Sigmoid colon (tissue), 7 donors: ENCODE measurements at regions of chr10 and their contacts with region 1.

Region 1: DNA sequence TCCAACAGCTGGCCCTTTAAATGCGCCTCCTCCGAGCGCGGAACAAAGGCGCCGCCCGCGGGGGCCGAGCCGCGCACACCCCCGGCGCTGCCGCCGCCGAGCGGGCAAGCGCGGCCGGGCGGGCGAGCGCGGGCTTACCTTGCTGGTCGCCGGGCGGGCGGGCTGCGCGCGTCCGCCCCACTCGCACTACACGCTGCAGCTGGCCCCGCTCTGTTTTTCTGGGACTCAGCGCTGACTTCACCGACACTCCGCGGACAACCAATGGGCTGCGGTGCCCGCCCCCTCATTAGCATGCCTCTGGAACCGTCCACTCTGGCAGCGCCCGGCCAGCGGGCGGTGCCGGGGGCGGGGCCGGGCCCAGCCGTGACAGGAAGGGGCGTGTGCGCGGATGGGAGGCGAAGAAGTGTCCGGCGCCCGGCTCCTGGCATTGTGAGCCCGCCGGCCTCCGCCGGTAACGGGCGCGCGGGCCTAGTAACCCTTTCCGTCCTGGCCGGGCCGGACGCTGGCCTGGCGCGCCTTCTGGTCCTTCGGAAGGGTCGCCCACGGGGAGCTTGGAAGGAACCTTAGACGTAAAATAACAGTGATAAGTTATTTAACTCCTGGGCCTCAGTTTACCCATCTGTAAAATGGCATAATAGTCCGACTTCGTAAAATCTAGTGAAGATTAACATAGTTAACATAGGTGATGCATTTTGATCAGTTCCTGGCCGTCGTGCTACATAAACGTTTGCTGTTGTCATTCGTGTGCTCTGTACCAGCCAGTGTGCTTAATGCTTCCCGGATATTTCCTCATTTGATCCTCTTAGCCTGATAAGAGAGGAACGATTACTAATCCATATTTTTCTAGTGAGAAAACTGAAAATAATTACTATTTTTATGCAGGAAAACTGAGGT is at the start of gene SORBS1:
- DNase-seq: peak; percentile 99
- H3K4me3 ChIP-seq: peak within 1 kb of the TSS; percentile 82 to 96 (median 90)
- H3K27ac ChIP-seq: peak within 1 kb of the TSS; percentile 93 to 98 (median 96)
- H3K4me1 ChIP-seq: peaks cover 0 to 43% (median 37%) of the 10 kb centered on the region in 4 donors
- H3K27me3 ChIP-seq: no peaks in the 10 kb centered on the region
- CTCF ChIP-seq: no peak
- EP300 ChIP-seq: peak in 1 of 4 donors; percentile 44
- POLR2A ChIP-seq: peak in 1 of 2 donors; percentile 53
- total RNA-seq, gene SORBS1: 664 to 1,403 (median 979) TPM

Region 2: GRCh38 chr10:95430231-95430951 is 131.0 kb before region 1 on chr10:
- intact Hi-C with region 1: loop called (anchors 5 kb)
- DNase-seq: peak; percentile 86
- H3K4me3 ChIP-seq: no peak overlapping the region
- H3K27ac ChIP-seq: peak overlapping the region; percentile 84 to 98 (median 90)
- H3K4me1 ChIP-seq: peaks cover 0 to 97% (median 93%) of the 10 kb centered on the region in 4 donors
- H3K27me3 ChIP-seq: no peaks in the 10 kb centered on the region
- CTCF ChIP-seq: peak; percentile 90 to 93 (median 92)
- EP300 ChIP-seq: no peak
- POLR2A ChIP-seq: no peak

Region 3: GRCh38 chr10:95459446-95460045 is 101.9 kb before region 1 on chr10:
- intact Hi-C with region 1: no loop called
- DNase-seq: no peak
- H3K4me3 ChIP-seq: peak overlapping the region in 1 of 4 donors; percentile 4
- H3K27ac ChIP-seq: peak overlapping the region; percentile 84 to 98 (median 90)
- H3K4me1 ChIP-seq: peaks cover 0 to 100% (median 98%) of the 10 kb centered on the region in 4 donors
- H3K27me3 ChIP-seq: no peaks in the 10 kb centered on the region
- CTCF ChIP-seq: no peak
- EP300 ChIP-seq: no peak
- POLR2A ChIP-seq: no peak

Region 4: DNA sequence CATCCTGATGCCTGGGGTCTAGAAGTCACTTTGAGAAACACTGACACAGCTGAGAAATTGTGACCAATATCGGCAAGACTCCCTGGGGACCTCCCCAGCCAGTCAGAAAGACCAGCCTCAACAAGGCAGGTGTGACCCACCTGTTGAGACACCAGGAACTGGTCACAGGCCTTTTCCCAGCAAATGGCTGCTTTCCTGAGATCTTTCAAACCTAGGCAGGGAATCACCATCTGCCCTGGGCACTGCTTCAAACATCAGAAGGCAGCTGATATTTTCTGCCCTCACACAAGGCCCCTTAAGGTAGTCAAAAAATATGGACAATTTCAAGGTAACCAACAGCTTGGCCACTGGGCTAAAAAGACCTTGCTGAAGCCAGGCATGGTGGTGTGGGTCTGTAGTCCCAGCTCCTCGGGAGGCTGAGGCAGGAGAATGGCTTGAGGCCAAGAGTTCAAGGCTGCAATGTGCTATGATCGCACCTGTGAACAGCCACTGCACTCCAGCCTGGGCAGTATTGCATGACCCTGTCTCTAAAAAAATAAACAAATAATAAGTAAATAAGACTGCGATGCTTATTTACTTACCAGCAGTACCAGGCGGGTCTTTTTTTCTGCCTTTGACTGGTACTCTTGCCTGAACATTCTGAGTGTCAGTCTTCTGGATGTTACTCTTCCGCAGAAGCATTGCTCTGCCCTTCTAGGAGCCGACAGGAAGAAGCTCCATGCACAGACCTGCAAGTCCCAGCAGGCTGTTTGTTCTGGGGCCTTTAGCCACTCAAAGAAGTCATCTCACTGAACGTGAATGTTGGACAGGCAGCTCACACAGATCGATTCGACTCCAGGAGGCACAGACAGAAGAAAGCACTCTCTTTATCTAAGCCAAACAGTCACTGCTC is 60.0 kb before region 1 on chr10:
- intact Hi-C with region 1: loop called (anchors 5 kb)
- DNase-seq: no peak
- H3K4me3 ChIP-seq: peak overlapping the region in 3 of 4 donors; percentile 11 to 26 (median 17)
- H3K27ac ChIP-seq: peak overlapping the region; percentile 93 to 98 (median 96)
- H3K4me1 ChIP-seq: peaks cover 0 to 92% (median 92%) of the 10 kb centered on the region in 4 donors
- H3K27me3 ChIP-seq: no peaks in the 10 kb centered on the region
- CTCF ChIP-seq: no peak
- EP300 ChIP-seq: no peak
- POLR2A ChIP-seq: no peak

Region 5: DNA sequence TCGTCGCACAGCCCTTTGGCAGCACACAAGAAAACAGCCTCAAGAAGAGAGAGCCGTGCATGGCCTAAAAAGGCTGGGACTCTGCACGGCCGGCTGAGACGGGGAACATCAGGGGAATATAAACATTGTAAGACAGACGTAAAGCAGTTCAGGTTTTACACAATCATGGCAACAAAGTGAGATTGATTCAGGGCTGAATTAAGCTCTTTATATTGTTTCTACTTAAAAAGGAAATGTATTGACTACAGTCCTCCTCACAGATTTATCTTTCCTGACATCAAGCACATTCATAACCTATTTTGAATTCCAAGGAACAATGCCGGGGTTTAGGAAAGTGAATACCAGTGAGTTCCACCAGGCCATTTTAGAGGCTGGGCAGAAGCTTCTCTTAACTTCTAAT is 25.4 kb before region 1 on chr10:
- intact Hi-C with region 1: loop called (anchors 2 kb)
- DNase-seq: peak; percentile 95
- H3K4me3 ChIP-seq: no peak overlapping the region
- H3K27ac ChIP-seq: peak overlapping the region; percentile 93 to 98 (median 96)
- H3K4me1 ChIP-seq: peaks cover 0 to 100% (median 95%) of the 10 kb centered on the region in 4 donors
- H3K27me3 ChIP-seq: no peaks in the 10 kb centered on the region
- CTCF ChIP-seq: peak in 1 of 4 experiments; percentile 27
- EP300 ChIP-seq: peak; percentile 98 to 100 (median 99)
- POLR2A ChIP-seq: no peak

Region 6: DNA sequence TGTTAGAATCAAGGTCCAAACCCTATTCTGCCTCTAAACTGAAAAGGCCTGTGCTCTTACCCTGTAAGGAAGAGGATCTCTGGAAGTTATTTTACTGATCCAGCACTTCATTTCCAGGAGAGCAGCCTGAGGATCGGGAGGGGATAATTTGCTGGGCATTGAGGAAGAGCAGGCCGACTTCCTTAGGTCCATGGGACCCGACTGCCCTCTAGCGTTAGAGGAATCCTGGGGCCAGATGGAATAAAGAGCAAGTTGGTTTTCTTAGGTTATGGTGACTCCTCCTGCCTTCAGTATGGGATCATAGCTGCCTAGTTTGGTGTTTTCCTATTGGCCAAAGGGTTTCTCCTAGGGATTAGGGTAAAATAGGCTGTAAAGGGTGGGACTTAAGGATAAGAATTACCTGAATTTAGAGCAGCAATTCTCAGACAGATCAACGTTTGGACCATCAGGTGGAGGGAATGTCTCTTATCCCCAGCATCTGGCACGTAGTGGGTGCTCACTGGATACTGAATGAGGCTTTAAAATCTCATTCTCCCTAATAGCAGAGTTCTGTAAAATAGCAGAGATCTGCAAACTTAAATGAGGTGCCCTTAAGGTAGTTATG is 39.8 kb after region 1 on chr10:
- intact Hi-C with region 1: loop called (anchors 2 kb)
- DNase-seq: peak; percentile 92
- H3K4me3 ChIP-seq: no peak overlapping the region
- H3K27ac ChIP-seq: peak overlapping the region; percentile 52 to 95 (median 86)
- H3K4me1 ChIP-seq: peaks cover 0 to 45% (median 39%) of the 10 kb centered on the region in 4 donors
- H3K27me3 ChIP-seq: no peaks in the 10 kb centered on the region
- CTCF ChIP-seq: peak; percentile 83 to 97 (median 92)
- EP300 ChIP-seq: no peak
- POLR2A ChIP-seq: no peak